ENCODE measurements at regions of chr7 and their contacts with region 1.

Region 1: DNA sequence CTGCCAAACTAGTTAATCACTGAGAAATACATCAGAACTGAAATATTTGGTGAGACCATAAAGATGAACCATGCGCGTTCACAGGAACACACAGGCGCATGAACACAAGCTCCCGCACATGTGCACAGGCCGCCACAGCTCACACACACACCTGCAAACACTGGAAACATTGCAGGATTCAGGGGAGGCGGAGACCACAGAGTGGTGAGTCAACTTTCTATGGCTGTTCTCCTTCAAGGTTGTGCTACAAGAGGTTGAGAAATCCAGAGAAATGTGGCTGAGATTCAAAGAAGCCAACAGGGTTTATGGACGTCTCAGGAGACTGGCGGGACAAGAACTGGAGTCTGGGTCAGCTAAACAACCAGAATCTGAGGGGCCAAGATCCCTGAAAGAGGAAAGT is 17.8 kb downstream of the ESYT2 start:
- DNase-seq: peak in 2 of 4 experiments; percentile 20 to 33
- ATAC-seq: peak; percentile 40
- H3K4me3 ChIP-seq: no peak overlapping the region
- H3K27ac ChIP-seq: peak overlapping the region; percentile 2; the same call in 1 of the 3 replicates
- H3K4me1 ChIP-seq: peaks cover 8 to 21% of the 10 kb centered on the region in 2 experiments
- H3K27me3 ChIP-seq: no peaks in the 10 kb centered on the region
- CTCF ChIP-seq: no peak
- EP300 ChIP-seq: no peak
- POLR2A ChIP-seq: no peak
- RAD21 ChIP-seq: no peak

Region 2: GRCh38 chr7:158824028-158824427 is 12.6 kb after region 1 on chr7:
- CTCF ChIA-PET with region 1: no interaction called
- POLR2A ChIA-PET with region 1: interaction called, 23 read pairs
- in situ Hi-C with region 1: no loop called
- intact Hi-C with region 1: no loop called
- DNase-seq: peak in 1 of 4 experiments; percentile 42
- ATAC-seq: no peak
- H3K4me3 ChIP-seq: no peak overlapping the region
- H3K27ac ChIP-seq: no peak overlapping the region
- H3K4me1 ChIP-seq: peaks cover 24 to 37% of the 10 kb centered on the region in 2 experiments
- H3K27me3 ChIP-seq: no peaks in the 10 kb centered on the region
- CTCF ChIP-seq: no peak
- EP300 ChIP-seq: no peak
- POLR2A ChIP-seq: no peak
- RAD21 ChIP-seq: no peak

Measured in K562 (cell line).